PC-9 (cell line): ENCODE measurements at regions of chr5 and their contacts with region 1.

Region 1: DNA sequence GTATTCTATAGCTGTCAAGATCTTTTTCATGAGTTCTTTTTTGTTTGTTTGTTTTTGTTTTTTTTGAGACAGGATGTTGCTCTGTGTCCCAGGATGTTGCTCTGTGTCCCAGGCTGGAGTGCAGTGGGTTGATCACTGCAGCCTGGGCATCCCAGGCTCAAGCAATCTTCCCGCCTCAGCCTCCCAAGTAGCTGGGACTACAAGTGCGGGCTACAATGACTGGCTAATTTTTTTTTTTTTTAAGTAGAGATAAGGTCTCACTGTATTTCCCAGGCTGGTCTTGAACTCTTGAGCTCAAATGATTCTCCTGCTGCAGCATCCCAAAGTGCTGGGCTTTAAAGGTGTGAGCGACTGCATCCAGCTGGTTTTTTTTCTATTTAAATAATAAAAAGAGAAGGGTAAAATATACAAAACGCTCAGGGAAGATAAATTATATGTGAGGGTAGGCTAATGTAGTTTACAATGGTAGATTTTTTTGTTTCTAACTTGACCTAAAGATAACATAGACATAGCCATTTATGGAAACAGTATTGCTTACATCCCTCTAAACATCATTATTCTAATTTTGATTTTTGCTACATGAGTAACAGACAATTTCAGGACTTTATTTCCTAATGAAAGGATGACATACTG is 21.9 kb downstream of the ERBIN start:
- DNase-seq: no peak
- H3K4me3 ChIP-seq: no peak overlapping the region
- H3K27ac ChIP-seq: no peak overlapping the region
- H3K4me1 ChIP-seq: no peaks in the 10 kb centered on the region
- H3K27me3 ChIP-seq: no peaks in the 10 kb centered on the region
- CTCF ChIP-seq: no peak

Region 2: GRCh38 chr5:65994117-65994786 is 46.0 kb after region 1 on chr5:
- CTCF ChIA-PET with region 1: no interaction called
- POLR2A ChIA-PET with region 1: interaction called, 14 read pairs
- intact Hi-C with region 1: no loop called
- DNase-seq: no peak
- H3K4me3 ChIP-seq: no peak overlapping the region
- H3K27ac ChIP-seq: no peak overlapping the region
- H3K4me1 ChIP-seq: no peaks in the 10 kb centered on the region
- H3K27me3 ChIP-seq: no peaks in the 10 kb centered on the region
- CTCF ChIP-seq: no peak